ENCODE measurements at regions of chr15 and their contacts with region 1.

Region 1: DNA sequence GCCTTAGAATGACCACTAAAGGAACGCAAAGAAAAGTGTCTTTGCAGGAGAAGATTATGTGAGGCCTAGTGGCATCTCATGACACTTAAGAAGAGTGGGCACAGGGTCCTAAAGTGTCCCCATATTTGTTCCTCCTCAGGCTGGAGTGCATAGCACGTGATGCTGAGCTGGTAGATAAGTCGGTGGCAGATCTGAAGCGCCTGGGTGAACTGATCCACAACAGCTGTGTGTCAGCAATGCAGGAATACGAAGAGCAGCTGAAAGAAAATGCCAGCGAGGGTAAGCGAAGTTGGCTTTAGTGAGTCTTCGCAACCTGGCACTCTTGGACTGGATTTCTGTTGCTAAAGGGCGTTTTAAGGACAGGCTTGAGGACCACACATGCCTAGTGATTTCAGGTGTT is 92.6 kb downstream of the CHD2 start:
- DNase-seq: no peak
- H3K4me3 ChIP-seq: no peak overlapping the region
- H3K27ac ChIP-seq: no peak overlapping the region
- H3K4me1 ChIP-seq: no peaks in the 10 kb centered on the region
- H3K27me3 ChIP-seq: no peaks in the 10 kb centered on the region
- CTCF ChIP-seq: no peak
- EP300 ChIP-seq: no peak
- POLR2A ChIP-seq: no peak

Region 2: GRCh38 chr15:92930776-92931175 is 61.9 kb before region 1 on chr15:
- intact Hi-C with region 1: loop called in 1 of 4 experiments (anchors 10 kb)
- DNase-seq: no peak
- H3K4me3 ChIP-seq: no peak overlapping the region
- H3K27ac ChIP-seq: no peak overlapping the region
- H3K4me1 ChIP-seq: peaks cover 1% of the 10 kb centered on the region
- H3K27me3 ChIP-seq: no peaks in the 10 kb centered on the region
- CTCF ChIP-seq: no peak
- EP300 ChIP-seq: no peak
- POLR2A ChIP-seq: no peak